ENCODE measurements at regions of chr7 and their contacts with region 1.

Region 1: DNA sequence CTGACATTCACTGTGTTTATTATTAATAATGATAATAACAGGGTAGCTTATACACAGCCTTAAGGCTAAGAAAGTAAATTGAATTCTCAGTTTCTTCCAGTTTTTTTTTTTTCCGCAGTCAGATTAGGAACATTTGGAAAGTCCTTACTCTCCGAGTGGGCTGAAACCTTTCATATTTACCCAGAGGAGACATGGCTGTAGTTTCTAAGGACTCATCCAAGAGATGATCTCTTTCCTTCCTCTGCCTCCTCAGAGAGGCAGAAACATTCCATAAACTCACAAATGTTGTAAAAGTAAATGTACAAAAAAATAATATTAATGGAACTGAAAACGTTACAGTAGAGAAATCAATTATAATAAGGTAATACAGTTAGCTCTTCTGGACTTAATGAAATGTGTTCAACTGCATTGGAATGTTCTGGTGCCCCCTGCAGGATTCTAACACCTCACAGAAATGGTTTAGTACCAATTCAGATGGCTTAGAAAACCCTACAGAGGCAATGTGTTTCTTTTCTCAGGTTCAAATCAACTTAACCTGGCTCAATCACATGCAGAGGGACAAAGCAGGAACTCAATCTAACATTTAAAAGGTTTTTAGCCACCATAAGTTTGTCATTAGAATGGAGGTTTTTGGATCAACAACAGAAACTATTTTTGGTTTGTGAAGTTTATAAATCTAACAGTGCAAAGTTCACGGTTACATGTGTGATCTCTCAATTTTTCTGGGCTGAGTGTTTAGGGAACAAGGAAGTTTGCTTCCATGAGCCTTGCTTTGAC is 71.7 kb downstream of the ICA1 start:
- DNase-seq: peak; percentile 77
- ATAC-seq: peak; percentile 97
- H3K4me3 ChIP-seq: no peak overlapping the region
- H3K27ac ChIP-seq: peak overlapping the region; percentile 44; the same call in 1 of the 2 replicates
- H3K4me1 ChIP-seq: no peaks in the 10 kb centered on the region
- H3K27me3 ChIP-seq: no peaks in the 10 kb centered on the region
- CTCF ChIP-seq: peak; percentile 66 to 82 (median 81); a peak in 5 of 6 replicates
- EP300 ChIP-seq: no peak
- POLR2A ChIP-seq: no peak
- RAD21 ChIP-seq: peak; percentile 97

Region 2: GRCh38 chr7:7789551-7789988 is 400.7 kb before region 1 on chr7:
- CTCF ChIA-PET with region 1: no interaction called
- POLR2A ChIA-PET with region 1: interaction called, 10 read pairs
- RAD21 ChIA-PET with region 1: interaction called, 4 read pairs
- SMC1A ChIA-PET with region 1: no interaction called
- in situ Hi-C with region 1: no loop called
- intact Hi-C with region 1: no loop called
- DNase-seq: peak; percentile 73
- ATAC-seq: peak; percentile 99
- H3K4me3 ChIP-seq: no peak overlapping the region
- H3K27ac ChIP-seq: no peak overlapping the region; the same call in 1 of the 2 replicates
- H3K4me1 ChIP-seq: peaks cover 11% of the 10 kb centered on the region
- H3K27me3 ChIP-seq: no peaks in the 10 kb centered on the region
- CTCF ChIP-seq: no peak
- EP300 ChIP-seq: peak; percentile 28 to 84; a peak in 2 of 4 replicates
- POLR2A ChIP-seq: no peak
- RAD21 ChIP-seq: no peak

Region 3: DNA sequence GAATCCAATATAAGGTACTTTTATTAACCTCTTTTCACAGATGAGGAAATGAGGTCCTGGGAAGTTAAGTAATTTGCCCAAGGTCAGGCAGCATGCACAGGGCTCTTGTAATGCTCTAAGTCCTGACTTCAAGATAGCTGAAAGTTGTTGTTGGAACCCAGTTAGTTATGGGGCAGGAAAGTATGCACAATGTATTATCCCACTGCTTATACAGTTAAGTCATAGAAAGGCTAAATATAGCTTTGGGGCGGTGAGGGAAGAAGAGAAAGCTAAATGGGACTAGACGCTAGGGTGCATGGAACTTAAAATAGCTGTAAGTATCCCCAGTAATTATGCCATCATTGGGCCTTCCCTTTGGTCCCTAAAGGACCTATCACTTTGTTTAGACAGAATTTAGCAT is 212.5 kb before region 1 on chr7:
- CTCF ChIA-PET with region 1: interaction called, 10 read pairs
- POLR2A ChIA-PET with region 1: interaction called, 5 read pairs
- RAD21 ChIA-PET with region 1: interaction called, 86 read pairs
- SMC1A ChIA-PET with region 1: interaction called, 16 read pairs
- in situ Hi-C with region 1: no loop called
- intact Hi-C with region 1: no loop called
- DNase-seq: no peak
- ATAC-seq: peak; percentile 4
- H3K4me3 ChIP-seq: peak overlapping the region; percentile 47; the same call in 1 of the 2 replicates
- H3K27ac ChIP-seq: peak overlapping the region; percentile 30; the same call in 1 of the 2 replicates
- H3K4me1 ChIP-seq: peaks cover 4% of the 10 kb centered on the region; the same call in 1 of the 2 replicates
- H3K27me3 ChIP-seq: no peaks in the 10 kb centered on the region
- CTCF ChIP-seq: no peak
- EP300 ChIP-seq: no peak
- POLR2A ChIP-seq: no peak
- RAD21 ChIP-seq: no peak

Region 4: GRCh38 chr7:8035647-8036518 is 154.4 kb before region 1 on chr7:
- CTCF ChIA-PET with region 1: interaction called, 4 read pairs
- POLR2A ChIA-PET with region 1: no interaction called
- RAD21 ChIA-PET with region 1: interaction called, 5 read pairs
- SMC1A ChIA-PET with region 1: interaction called, 23 read pairs
- in situ Hi-C with region 1: no loop called
- intact Hi-C with region 1: loop called (anchors 2 kb)
- DNase-seq: peak; percentile 23
- ATAC-seq: peak; percentile 88
- H3K4me3 ChIP-seq: no peak overlapping the region
- H3K27ac ChIP-seq: no peak overlapping the region
- H3K4me1 ChIP-seq: no peaks in the 10 kb centered on the region
- H3K27me3 ChIP-seq: no peaks in the 10 kb centered on the region
- CTCF ChIP-seq: peak in 2 of 3 experiments; percentile 50 to 57; a peak in 4 of 6 replicates
- EP300 ChIP-seq: no peak
- POLR2A ChIP-seq: no peak
- RAD21 ChIP-seq: peak; percentile 38

Region 5: GRCh38 chr7:8115547-8116402 is 74.5 kb before region 1 on chr7:
- CTCF ChIA-PET with region 1: interaction called, 9 read pairs
- POLR2A ChIA-PET with region 1: interaction called, 4 read pairs
- RAD21 ChIA-PET with region 1: interaction called, 7 read pairs
- SMC1A ChIA-PET with region 1: interaction called, 11 read pairs
- in situ Hi-C with region 1: no loop called
- intact Hi-C with region 1: loop called (anchors 1 kb)
- DNase-seq: peak; percentile 98
- ATAC-seq: peak; percentile 85
- H3K4me3 ChIP-seq: no peak overlapping the region
- H3K27ac ChIP-seq: peak overlapping the region; percentile 56
- H3K4me1 ChIP-seq: peaks cover 43% of the 10 kb centered on the region
- H3K27me3 ChIP-seq: no peaks in the 10 kb centered on the region
- CTCF ChIP-seq: no peak
- EP300 ChIP-seq: peak; percentile 77 to 93; a peak in 2 of 4 replicates
- POLR2A ChIP-seq: no peak
- RAD21 ChIP-seq: peak; percentile 30; the same call in 1 of the 2 replicates

Region 6: GRCh38 chr7:8134089-8134733 is 56.1 kb before region 1 on chr7:
- CTCF ChIA-PET with region 1: interaction called, 8 read pairs
- POLR2A ChIA-PET with region 1: interaction called, 18 read pairs
- RAD21 ChIA-PET with region 1: interaction called, 5 read pairs
- SMC1A ChIA-PET with region 1: interaction called, 113 read pairs
- in situ Hi-C with region 1: no loop called
- intact Hi-C with region 1: loop called (anchors 1 kb)
- DNase-seq: peak; percentile 99
- ATAC-seq: peak; percentile 73
- H3K4me3 ChIP-seq: no peak overlapping the region
- H3K27ac ChIP-seq: peak overlapping the region; percentile 94
- H3K4me1 ChIP-seq: peaks cover 54% of the 10 kb centered on the region
- H3K27me3 ChIP-seq: no peaks in the 10 kb centered on the region
- CTCF ChIP-seq: no peak
- EP300 ChIP-seq: peak; percentile 81 to 92
- POLR2A ChIP-seq: no peak
- RAD21 ChIP-seq: peak; percentile 39; the same call in 1 of the 2 replicates

Region 7: GRCh38 chr7:8217200-8218068 is 27.1 kb after region 1 on chr7:
- CTCF ChIA-PET with region 1: interaction called, 17 read pairs
- POLR2A ChIA-PET with region 1: no interaction called
- RAD21 ChIA-PET with region 1: interaction called, 15 read pairs
- SMC1A ChIA-PET with region 1: interaction called, 9 read pairs
- in situ Hi-C with region 1: no loop called
- intact Hi-C with region 1: no loop called
- DNase-seq: peak; percentile 43
- ATAC-seq: peak; percentile 80
- H3K4me3 ChIP-seq: no peak overlapping the region
- H3K27ac ChIP-seq: no peak overlapping the region
- H3K4me1 ChIP-seq: no peaks in the 10 kb centered on the region
- H3K27me3 ChIP-seq: no peaks in the 10 kb centered on the region
- CTCF ChIP-seq: peak; percentile 42 to 67 (median 45); a peak in 4 of 6 replicates
- EP300 ChIP-seq: no peak
- POLR2A ChIP-seq: no peak
- RAD21 ChIP-seq: peak; percentile 81

Region 8: GRCh38 chr7:8418629-8419245 is 228.4 kb after region 1 on chr7:
- CTCF ChIA-PET with region 1: no interaction called
- POLR2A ChIA-PET with region 1: no interaction called
- RAD21 ChIA-PET with region 1: no interaction called
- SMC1A ChIA-PET with region 1: no interaction called
- in situ Hi-C with region 1: no loop called
- intact Hi-C with region 1: no loop called
- DNase-seq: peak; percentile 19
- ATAC-seq: peak; percentile 91
- H3K4me3 ChIP-seq: no peak overlapping the region
- H3K27ac ChIP-seq: no peak overlapping the region
- H3K4me1 ChIP-seq: no peaks in the 10 kb centered on the region
- H3K27me3 ChIP-seq: no peaks in the 10 kb centered on the region; a peak in 1 of 4 replicates
- CTCF ChIP-seq: peak; percentile 60 to 72 (median 69); a peak in 5 of 6 replicates
- EP300 ChIP-seq: no peak
- POLR2A ChIP-seq: no peak
- RAD21 ChIP-seq: peak; percentile 73

Region 9: DNA sequence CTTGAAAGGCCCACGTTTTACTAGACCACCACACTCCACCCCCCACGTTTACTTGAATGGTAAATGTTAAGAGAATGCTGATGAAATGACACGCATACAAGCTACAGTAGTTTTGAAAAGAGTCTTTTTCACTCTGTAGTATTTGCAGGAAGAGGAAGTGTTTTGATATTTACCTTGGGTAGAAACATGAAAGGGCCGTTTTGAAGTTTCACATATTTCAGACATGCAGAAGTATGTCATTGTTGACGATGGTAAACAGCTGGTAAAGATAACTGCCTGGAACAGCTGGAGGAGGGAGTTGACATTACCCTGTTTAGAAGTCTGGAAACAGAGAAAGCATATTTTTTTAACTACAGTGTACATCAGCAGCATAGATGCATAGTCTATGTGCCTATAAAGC is 403.8 kb after region 1 on chr7:
- CTCF ChIA-PET with region 1: no interaction called
- POLR2A ChIA-PET with region 1: no interaction called
- RAD21 ChIA-PET with region 1: no interaction called
- SMC1A ChIA-PET with region 1: no interaction called
- in situ Hi-C with region 1: no loop called
- intact Hi-C with region 1: no loop called
- DNase-seq: no peak
- ATAC-seq: peak; percentile 66
- H3K4me3 ChIP-seq: no peak overlapping the region
- H3K27ac ChIP-seq: no peak overlapping the region
- H3K4me1 ChIP-seq: no peaks in the 10 kb centered on the region
- H3K27me3 ChIP-seq: no peaks in the 10 kb centered on the region
- CTCF ChIP-seq: no peak
- EP300 ChIP-seq: no peak
- POLR2A ChIP-seq: no peak
- RAD21 ChIP-seq: no peak